Heart right ventricle (tissue), 16 donors: ENCODE measurements at regions of chr11 and their contacts with region 1.

Region 1: GRCh38 chr11:91239359-91239758 is 985.3 kb upstream of the FAT3 start:
- DNase-seq: no peak
- ATAC-seq: no peak
- H3K4me3 ChIP-seq: no peak overlapping the region
- H3K27ac ChIP-seq: no peak overlapping the region
- H3K4me1 ChIP-seq: no peaks in the 10 kb centered on the region
- H3K27me3 ChIP-seq: no peaks in the 10 kb centered on the region
- CTCF ChIP-seq: no peak

Region 2: GRCh38 chr11:91263496-91264365 is 24.4 kb after region 1 on chr11:
- intact Hi-C with region 1: loop called in 1 of 10 experiments (anchors 2 kb)
- DNase-seq: no peak
- ATAC-seq: no peak
- H3K4me3 ChIP-seq: no peak overlapping the region
- H3K27ac ChIP-seq: no peak overlapping the region
- H3K4me1 ChIP-seq: no peaks in the 10 kb centered on the region
- H3K27me3 ChIP-seq: no peaks in the 10 kb centered on the region
- CTCF ChIP-seq: no peak